ENCODE measurements at regions of chr20 and their contacts with region 1.

Region 1: GRCh38 chr20:35954200-35954906 is at the start of gene SCAND1:
- DNase-seq: peak; percentile 98
- ATAC-seq: peak; percentile 89
- H3K4me3 Mint-ChIP-seq: peak within 1 kb of the TSS; percentile 99
- H3K27ac Mint-ChIP-seq: peak within 1 kb of the TSS; percentile 100
- H3K4me1 Mint-ChIP-seq: peaks cover 24% of the 10 kb centered on the region
- H3K27me3 Mint-ChIP-seq: no peaks in the 10 kb centered on the region
- total RNA-seq, gene SCAND1: 63.2 to 64.7 TPM

Region 2: GRCh38 chr20:35601008-35601973 is 353.1 kb before region 1 on chr20:
- CTCF ChIA-PET with region 1: interaction called, 10 read pairs
- POLR2A ChIA-PET with region 1: no interaction called
- DNase-seq: peak; percentile 82
- ATAC-seq: peak; percentile 93
- H3K4me3 Mint-ChIP-seq: peak overlapping the region; percentile 67
- H3K27ac Mint-ChIP-seq: peak overlapping the region; percentile 30
- H3K4me1 Mint-ChIP-seq: peaks cover 10% of the 10 kb centered on the region
- H3K27me3 Mint-ChIP-seq: peaks cover 60% of the 10 kb centered on the region

Region 3: DNA sequence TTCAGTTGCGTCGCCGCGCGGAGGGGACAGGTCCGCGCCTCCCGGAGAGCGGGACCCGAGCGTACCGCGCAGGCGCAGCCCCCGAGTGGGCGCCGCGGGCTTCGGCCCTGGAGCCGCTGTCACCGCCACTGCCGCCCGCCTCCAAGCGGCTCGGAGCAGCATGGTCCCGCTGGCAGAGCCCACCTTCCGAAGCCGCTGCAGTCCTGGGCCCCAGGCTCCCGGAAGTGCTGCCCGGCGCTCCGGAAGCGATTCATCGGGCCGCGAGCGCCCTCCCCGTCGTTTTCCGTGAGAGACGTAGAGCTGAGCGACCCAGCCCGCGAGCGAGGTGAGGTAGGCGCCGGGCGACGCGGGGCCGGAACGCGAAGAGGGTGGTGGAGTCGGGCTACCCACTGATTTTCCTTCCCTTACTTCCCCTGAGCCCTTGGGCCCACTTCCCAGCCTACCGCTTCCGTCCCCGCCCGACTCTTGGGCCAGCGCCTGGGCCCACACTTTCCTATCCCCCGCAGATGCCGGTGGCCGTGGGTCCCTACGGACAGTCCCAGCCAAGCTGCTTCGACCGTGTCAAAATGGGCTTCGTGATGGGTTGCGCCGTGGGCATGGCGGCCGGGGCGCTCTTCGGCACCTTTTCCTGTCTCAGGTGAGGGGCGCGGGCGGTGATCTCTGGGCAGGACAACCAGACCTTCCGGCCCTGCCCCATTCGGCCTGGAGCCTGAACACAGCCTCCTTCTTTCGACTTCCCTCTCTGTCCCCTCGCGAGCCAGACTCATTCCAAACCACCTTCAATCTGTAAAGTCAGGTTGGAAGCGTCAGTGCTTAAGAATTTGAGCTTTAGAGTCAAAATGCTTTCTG is 255.0 kb before region 1 on chr20 and contains the starts of genes NFS1 and ROMO1:
- CTCF ChIA-PET with region 1: interaction called, 13 read pairs
- POLR2A ChIA-PET with region 1: interaction called, 8 read pairs
- DNase-seq: peak; percentile 91
- ATAC-seq: peak; percentile 88
- H3K4me3 Mint-ChIP-seq: peak within 1 kb of the TSS; percentile 84
- H3K27ac Mint-ChIP-seq: peak within 1 kb of the TSS; percentile 99
- H3K4me1 Mint-ChIP-seq: peaks cover 49% of the 10 kb centered on the region
- H3K27me3 Mint-ChIP-seq: no peaks in the 10 kb centered on the region
- total RNA-seq, gene NFS1: 32.7 to 34.7 TPM
- total RNA-seq, gene ROMO1: 134 to 143 TPM

Region 4: GRCh38 chr20:35893942-35894341 is 60.4 kb before region 1 on chr20:
- CTCF ChIA-PET with region 1: interaction called, 11 read pairs
- POLR2A ChIA-PET with region 1: no interaction called
- DNase-seq: no peak
- ATAC-seq: peak; percentile 68
- H3K4me3 Mint-ChIP-seq: no peak overlapping the region
- H3K27ac Mint-ChIP-seq: no peak overlapping the region
- H3K4me1 Mint-ChIP-seq: peaks cover 17% of the 10 kb centered on the region
- H3K27me3 Mint-ChIP-seq: no peaks in the 10 kb centered on the region

Region 5: GRCh38 chr20:35972462-35972861 is 18.1 kb after region 1 on chr20:
- CTCF ChIA-PET with region 1: interaction called, 12 read pairs
- POLR2A ChIA-PET with region 1: interaction called, 6 read pairs
- DNase-seq: no peak
- ATAC-seq: no peak
- H3K4me3 Mint-ChIP-seq: no peak overlapping the region
- H3K27ac Mint-ChIP-seq: no peak overlapping the region
- H3K4me1 Mint-ChIP-seq: no peaks in the 10 kb centered on the region
- H3K27me3 Mint-ChIP-seq: peaks cover 3% of the 10 kb centered on the region

Region 6: GRCh38 chr20:36030149-36030548 is 75.8 kb after region 1 on chr20:
- CTCF ChIA-PET with region 1: no interaction called
- POLR2A ChIA-PET with region 1: no interaction called
- DNase-seq: no peak
- ATAC-seq: no peak
- H3K4me3 Mint-ChIP-seq: no peak overlapping the region
- H3K27ac Mint-ChIP-seq: no peak overlapping the region
- H3K4me1 Mint-ChIP-seq: no peaks in the 10 kb centered on the region
- H3K27me3 Mint-ChIP-seq: peaks cover 15% of the 10 kb centered on the region

Region 7: GRCh38 chr20:36050436-36051317 is 96.3 kb after region 1 on chr20:
- CTCF ChIA-PET with region 1: no interaction called
- POLR2A ChIA-PET with region 1: interaction called, 15 read pairs
- DNase-seq: peak; percentile 92
- ATAC-seq: peak; percentile 95
- H3K4me3 Mint-ChIP-seq: peak overlapping the region; percentile 91
- H3K27ac Mint-ChIP-seq: peak overlapping the region; percentile 89
- H3K4me1 Mint-ChIP-seq: peaks cover 32% of the 10 kb centered on the region
- H3K27me3 Mint-ChIP-seq: peaks cover 12% of the 10 kb centered on the region